ENCODE measurements at regions of chr14 and their contacts with region 1.

Region 1: GRCh38 chr14:23076785-23077408 is 18.0 kb downstream of the ACIN1 start:
- DNase-seq: peak in 1 of 4 experiments; percentile 59
- ATAC-seq: peak; percentile 30; the same call in 2 of the 3 replicates
- H3K4me3 ChIP-seq: no peak overlapping the region
- H3K27ac ChIP-seq: no peak overlapping the region
- H3K4me1 ChIP-seq: peaks cover 17 to 40% of the 10 kb centered on the region in 2 experiments
- H3K27me3 ChIP-seq: no peaks in the 10 kb centered on the region
- CTCF ChIP-seq: peak; percentile 45 to 70 (median 68); a peak in 5 of 6 replicates
- EP300 ChIP-seq: no peak
- POLR2A ChIP-seq: no peak
- RAD21 ChIP-seq: peak; percentile 20 to 60

Region 2: DNA sequence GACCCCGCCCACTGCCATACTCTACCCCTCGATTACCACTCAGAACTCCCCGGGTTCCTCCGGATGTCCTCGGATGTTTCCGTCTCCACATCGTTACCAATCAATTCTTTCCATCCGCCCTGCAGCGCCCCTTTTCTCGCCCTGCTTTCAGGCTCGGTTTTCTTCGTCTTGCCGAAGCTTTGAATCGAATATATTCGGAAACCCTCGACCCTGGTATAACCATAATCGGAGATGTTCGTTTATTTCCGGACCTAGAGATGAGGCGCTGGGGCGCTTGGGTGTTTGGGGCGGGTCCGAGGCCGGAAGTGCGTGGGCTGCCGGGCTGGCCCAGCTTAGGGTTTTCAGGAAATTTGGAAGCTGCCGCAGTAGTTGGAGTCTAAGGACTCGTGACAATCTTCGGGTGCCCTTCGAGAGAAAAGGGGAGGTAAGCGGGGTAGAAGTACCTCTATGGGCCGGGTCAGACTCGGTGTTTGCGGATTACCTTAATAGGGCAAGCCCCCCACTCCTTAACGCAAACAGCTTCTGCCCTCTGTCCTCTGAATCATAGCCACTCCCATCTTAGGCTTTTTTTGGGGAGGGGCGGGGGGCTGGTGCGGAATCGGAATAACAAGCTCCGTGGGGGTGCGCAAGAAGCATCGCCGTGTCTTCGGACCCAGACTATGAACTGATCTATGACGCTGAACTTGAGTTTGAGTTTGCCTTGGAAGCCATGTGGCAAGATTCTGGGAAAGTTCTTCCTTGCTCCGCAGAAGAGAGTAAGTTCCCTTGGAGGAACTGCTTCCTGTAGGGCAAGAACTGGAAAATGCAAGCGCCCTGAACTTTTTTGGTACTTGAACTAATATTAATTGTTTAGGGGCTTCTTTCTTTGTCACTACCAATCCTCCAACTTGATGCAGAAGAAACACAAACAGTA is 18.6 kb after region 1 on chr14 and contains the start of gene C14orf119:
- CTCF ChIA-PET with region 1: interaction called, 5 read pairs
- POLR2A ChIA-PET with region 1: interaction called, 34 read pairs
- in situ Hi-C with region 1: no loop called
- intact Hi-C with region 1: loop called (anchors 2 kb)
- DNase-seq: peak; percentile 88 to 99 (median 96)
- ATAC-seq: peak; percentile 91
- H3K4me3 ChIP-seq: peak within 1 kb of the TSS; percentile 83
- H3K27ac ChIP-seq: peak within 1 kb of the TSS; percentile 98
- H3K4me1 ChIP-seq: peaks cover 8 to 29% of the 10 kb centered on the region in 2 experiments; a peak in 4 of 5 replicates
- H3K27me3 ChIP-seq: no peaks in the 10 kb centered on the region
- CTCF ChIP-seq: no peak
- EP300 ChIP-seq: peak; percentile 37; the same call in 1 of the 2 replicates
- POLR2A ChIP-seq: peak; percentile 89
- RAD21 ChIP-seq: no peak
- polyA plus RNA-seq, gene C14orf119: 249 to 251 TPM

Measured in K562 (cell line).